ENCODE measurements at regions of chr2 and their contacts with region 1.

Region 1: GRCh38 chr2:68385220-68385906 is 20.3 kb downstream of the PLEK start:
- DNase-seq: peak in 5 of 9 experiments; percentile 18 to 85 (median 45)
- ATAC-seq: peak; percentile 68
- H3K4me3 ChIP-seq: no peak overlapping the region
- H3K4me3 Mint-ChIP-seq: no peak overlapping the region
- H3K27ac ChIP-seq: peak overlapping the region in 1 of 2 experiments; percentile 77
- H3K27ac Mint-ChIP-seq: peak overlapping the region; percentile 66
- H3K4me1 ChIP-seq: peaks cover 52% of the 10 kb centered on the region
- H3K4me1 Mint-ChIP-seq: peaks cover 54% of the 10 kb centered on the region
- H3K27me3 ChIP-seq: no peaks in the 10 kb centered on the region
- H3K27me3 Mint-ChIP-seq: no peaks in the 10 kb centered on the region
- CTCF ChIP-seq: no peak

Region 2: GRCh38 chr2:68302281-68302875 is 83.0 kb before region 1 on chr2:
- CTCF ChIA-PET with region 1: no interaction called
- POLR2A ChIA-PET with region 1: interaction called, 10 read pairs
- intact Hi-C with region 1: no loop called
- DNase-seq: no peak
- ATAC-seq: no peak
- H3K4me3 ChIP-seq: no peak overlapping the region
- H3K4me3 Mint-ChIP-seq: no peak overlapping the region
- H3K27ac ChIP-seq: no peak overlapping the region
- H3K27ac Mint-ChIP-seq: no peak overlapping the region
- H3K4me1 ChIP-seq: no peaks in the 10 kb centered on the region
- H3K4me1 Mint-ChIP-seq: no peaks in the 10 kb centered on the region
- H3K27me3 ChIP-seq: no peaks in the 10 kb centered on the region
- H3K27me3 Mint-ChIP-seq: peaks cover 13% of the 10 kb centered on the region
- CTCF ChIP-seq: no peak

Region 3: DNA sequence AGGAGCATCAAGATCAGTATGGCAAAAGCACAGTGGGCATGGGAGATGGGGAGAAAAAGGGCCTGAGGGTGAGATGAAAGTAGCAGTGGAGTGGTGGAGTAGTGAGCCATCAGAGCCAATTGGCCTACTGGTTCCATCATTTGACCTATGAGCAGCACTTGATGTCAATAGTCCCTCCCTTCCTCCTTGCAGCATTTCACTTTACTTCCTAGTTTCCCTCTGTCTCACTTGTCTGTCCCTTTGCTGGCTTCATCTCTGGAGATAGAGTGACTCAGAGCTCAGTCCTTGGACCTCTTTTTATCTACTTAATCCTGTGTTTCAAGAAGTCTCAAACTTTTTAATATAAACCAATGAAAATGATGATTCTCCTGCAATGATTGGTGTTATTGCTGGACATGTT is 49.6 kb after region 1 on chr2:
- CTCF ChIA-PET with region 1: no interaction called
- POLR2A ChIA-PET with region 1: no interaction called
- intact Hi-C with region 1: loop called in 1 of 2 experiments (anchors 2 kb)
- DNase-seq: no peak
- ATAC-seq: no peak
- H3K4me3 ChIP-seq: no peak overlapping the region
- H3K4me3 Mint-ChIP-seq: no peak overlapping the region
- H3K27ac ChIP-seq: no peak overlapping the region
- H3K27ac Mint-ChIP-seq: no peak overlapping the region
- H3K4me1 ChIP-seq: no peaks in the 10 kb centered on the region
- H3K4me1 Mint-ChIP-seq: peaks cover 3% of the 10 kb centered on the region
- H3K27me3 ChIP-seq: no peaks in the 10 kb centered on the region
- H3K27me3 Mint-ChIP-seq: no peaks in the 10 kb centered on the region
- CTCF ChIP-seq: no peak